Breast epithelium (tissue), 4 donors: ENCODE measurements at regions of chr20 and their contacts with region 1.

Region 1: GRCh38 chr20:63881451-63882226 is 13.3 kb upstream of the DNAJC5 start:
- DNase-seq: no peak
- H3K4me3 ChIP-seq: no peak overlapping the region
- H3K27ac ChIP-seq: no peak overlapping the region
- H3K4me1 ChIP-seq: no peaks in the 10 kb centered on the region
- H3K27me3 ChIP-seq: no peaks in the 10 kb centered on the region
- CTCF ChIP-seq: no peak
- POLR2A ChIP-seq: no peak

Region 2: GRCh38 chr20:63836458-63837344 is 44.9 kb before region 1 on chr20:
- intact Hi-C with region 1: loop called (anchors 1 kb)
- DNase-seq: no peak
- H3K4me3 ChIP-seq: no peak overlapping the region
- H3K27ac ChIP-seq: peak overlapping the region in 1 of 2 donors; percentile 19
- H3K4me1 ChIP-seq: peaks cover 8 to 16% of the 10 kb centered on the region in 2 donors
- H3K27me3 ChIP-seq: no peaks in the 10 kb centered on the region
- CTCF ChIP-seq: no peak
- POLR2A ChIP-seq: no peak

Region 3: GRCh38 chr20:63863798-63864549 is 17.7 kb before region 1 on chr20:
- intact Hi-C with region 1: no loop called
- DNase-seq: peak; percentile 77 to 90
- H3K4me3 ChIP-seq: peak overlapping the region; percentile 88 to 98 (median 95)
- H3K27ac ChIP-seq: peak overlapping the region; percentile 95 to 97
- H3K4me1 ChIP-seq: peaks cover 5 to 12% of the 10 kb centered on the region in 2 donors
- H3K27me3 ChIP-seq: no peaks in the 10 kb centered on the region
- CTCF ChIP-seq: peak in 2 of 3 donors; percentile 35 to 49
- POLR2A ChIP-seq: no peak